Dendritic cell treated with granulocyte-macrophage colony-stimulating factor and Interleukin-4, amounts not matched to agents 40 ng/mL and 50 ng/mL, for 4 days (primary cell): ENCODE measurements at regions of chr2 and their contacts with region 1.

Region 1: DNA sequence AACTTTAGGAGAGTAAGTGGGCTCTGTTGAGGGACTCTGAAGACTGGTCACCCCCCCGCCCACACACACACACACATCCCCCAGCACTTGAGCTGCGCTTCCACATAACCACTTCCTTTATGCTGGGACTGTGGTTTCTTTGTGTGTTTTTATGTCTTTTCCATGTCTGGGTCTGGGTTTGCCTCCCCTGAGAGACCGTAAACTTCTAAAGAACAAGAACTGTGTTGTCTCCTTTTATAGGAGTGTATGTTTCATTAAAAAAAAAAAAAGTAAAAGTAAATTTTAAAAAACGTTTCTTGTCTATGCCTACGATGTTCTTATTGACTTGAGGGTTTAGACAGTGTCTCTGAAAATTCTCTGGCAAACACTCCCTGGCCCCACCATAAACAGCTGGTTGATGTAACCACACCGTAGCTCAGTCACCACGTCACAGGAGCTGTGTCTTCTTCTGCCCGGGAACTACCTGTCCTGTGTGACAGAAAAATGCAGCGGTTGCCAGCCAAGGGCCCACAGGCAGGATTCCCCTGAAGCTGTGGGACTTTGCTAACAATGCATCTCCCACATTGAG is 68.0 kb downstream of the KLHL29 start:
- H3K4me3 Mint-ChIP-seq: no peak overlapping the region
- H3K27ac Mint-ChIP-seq: no peak overlapping the region
- H3K4me1 Mint-ChIP-seq: peaks cover 43% of the 10 kb centered on the region
- H3K27me3 Mint-ChIP-seq: peaks cover 44% of the 10 kb centered on the region

Region 2: GRCh38 chr2:22904126-22904684 is 548.7 kb before region 1 on chr2:
- intact Hi-C with region 1: loop called (anchors 10 kb)
- H3K4me3 Mint-ChIP-seq: no peak overlapping the region
- H3K27ac Mint-ChIP-seq: no peak overlapping the region
- H3K4me1 Mint-ChIP-seq: no peaks in the 10 kb centered on the region
- H3K27me3 Mint-ChIP-seq: no peaks in the 10 kb centered on the region

Region 3: GRCh38 chr2:23199115-23199918 is 253.6 kb before region 1 on chr2:
- intact Hi-C with region 1: loop called (anchors 10 kb)
- H3K4me3 Mint-ChIP-seq: no peak overlapping the region
- H3K27ac Mint-ChIP-seq: no peak overlapping the region
- H3K4me1 Mint-ChIP-seq: no peaks in the 10 kb centered on the region
- H3K27me3 Mint-ChIP-seq: no peaks in the 10 kb centered on the region

Region 4: DNA sequence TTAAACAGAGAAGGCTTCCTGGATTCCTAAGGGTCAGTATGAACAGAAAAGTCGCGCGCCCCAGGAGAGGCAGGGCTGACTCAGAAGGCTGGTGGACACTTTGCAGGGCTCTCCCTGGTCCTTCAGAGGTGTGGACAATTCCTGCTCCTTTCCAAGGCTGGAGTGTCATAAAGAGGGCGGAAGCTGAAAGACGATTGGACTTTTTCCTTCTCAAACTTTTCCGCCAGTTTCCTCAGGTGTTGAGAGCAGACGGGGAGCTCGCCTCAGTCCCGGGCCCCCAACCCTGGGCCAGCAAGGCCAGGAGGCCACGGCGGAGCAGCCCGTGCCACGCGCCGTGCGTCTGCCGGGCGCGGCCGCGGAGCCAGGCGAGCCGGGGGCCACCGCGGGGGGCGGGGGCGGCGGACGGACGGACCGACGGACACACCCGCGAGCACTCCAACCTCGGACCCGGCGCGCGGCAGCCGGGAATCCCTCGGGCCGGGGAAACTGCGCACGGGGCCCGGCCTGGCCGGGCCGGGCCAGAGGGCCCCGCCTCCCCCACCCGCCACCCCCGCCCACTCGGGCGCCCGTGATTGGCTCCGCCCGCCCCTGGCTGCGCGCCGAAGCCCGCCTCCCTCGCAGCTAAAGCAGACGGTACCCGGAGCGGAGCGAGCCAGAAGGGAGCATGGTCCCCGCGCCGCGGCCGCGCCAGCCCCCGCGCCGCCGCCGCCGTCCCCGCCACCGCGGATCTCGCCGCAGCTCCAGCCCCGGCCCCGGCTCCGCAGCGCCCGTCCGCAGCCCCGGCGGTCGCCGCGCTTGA is 68.2 kb before region 1 on chr2 and contains the start of gene KLHL29:
- intact Hi-C with region 1: loop called (anchors 10 kb)
- H3K4me3 Mint-ChIP-seq: peak within 1 kb of the TSS; percentile 44
- H3K27ac Mint-ChIP-seq: no peak within 1 kb of the TSS
- H3K4me1 Mint-ChIP-seq: peaks cover 24% of the 10 kb centered on the region
- H3K27me3 Mint-ChIP-seq: peaks cover 83% of the 10 kb centered on the region